ENCODE measurements at regions of chr2 and their contacts with region 1.

Region 1: DNA sequence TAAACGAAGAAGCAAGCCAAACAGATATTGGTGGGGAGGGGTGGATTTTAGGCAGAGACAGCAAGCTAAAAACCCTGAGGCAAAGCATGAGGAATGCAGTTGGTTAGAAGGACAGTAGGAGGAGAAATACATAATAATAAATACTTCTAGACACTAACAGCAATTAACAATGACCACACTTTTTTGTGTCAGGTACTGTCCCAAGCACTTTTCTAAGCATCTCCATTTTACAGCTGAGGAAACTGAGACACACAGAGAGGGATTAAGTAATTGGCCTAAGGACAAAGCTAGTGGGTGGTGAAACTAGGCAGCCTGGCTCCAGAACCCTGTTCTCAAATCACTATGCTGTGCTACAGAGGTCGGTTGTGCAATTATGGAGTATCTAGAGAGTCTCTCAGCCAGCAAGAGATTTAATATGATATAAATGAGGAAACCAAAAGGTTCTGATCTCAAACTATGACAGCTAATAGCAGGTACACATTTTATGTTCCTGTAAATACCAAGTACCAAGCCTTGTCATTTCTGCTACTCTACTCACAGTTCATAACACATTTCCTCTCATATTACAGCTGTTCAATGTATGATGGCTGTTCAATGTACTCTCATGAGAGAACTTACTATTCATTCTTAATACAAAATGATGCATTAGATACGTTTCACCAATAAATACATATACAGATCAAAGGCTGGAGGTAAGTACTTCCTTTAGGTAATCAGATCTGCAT is 5.3 kb downstream of the MAP4K3 start:
- DNase-seq: no peak
- ATAC-seq: peak in 3 of 4 donors; percentile 63 to 68 (median 66)
- H3K4me3 ChIP-seq: peak overlapping the region; percentile 85
- H3K27ac ChIP-seq: peak overlapping the region; percentile 93
- H3K4me1 ChIP-seq: peaks cover 84% of the 10 kb centered on the region
- H3K27me3 ChIP-seq: no peaks in the 10 kb centered on the region
- CTCF ChIP-seq: no peak

Region 2: GRCh38 chr2:39379643-39380524 is 51.9 kb before region 1 on chr2:
- intact Hi-C with region 1: loop called (anchors 1 to 5 kb)
- DNase-seq: no peak
- ATAC-seq: peak; percentile 82 to 90 (median 86)
- H3K4me3 ChIP-seq: peak overlapping the region; percentile 38
- H3K27ac ChIP-seq: peak overlapping the region; percentile 82
- H3K4me1 ChIP-seq: peaks cover 83% of the 10 kb centered on the region
- H3K27me3 ChIP-seq: no peaks in the 10 kb centered on the region
- CTCF ChIP-seq: peak; percentile 64

Region 3: GRCh38 chr2:39403311-39403710 is 28.4 kb before region 1 on chr2:
- intact Hi-C with region 1: loop called (anchors 1 to 5 kb)
- DNase-seq: peak in 1 of 2 donors; percentile 15
- ATAC-seq: peak; percentile 52 to 66 (median 58)
- H3K4me3 ChIP-seq: no peak overlapping the region
- H3K27ac ChIP-seq: peak overlapping the region; percentile 76
- H3K4me1 ChIP-seq: peaks cover 93% of the 10 kb centered on the region
- H3K27me3 ChIP-seq: no peaks in the 10 kb centered on the region
- CTCF ChIP-seq: no peak

Measured in psoas muscle (tissue), 8 donors.